ENCODE measurements at regions of chr19 and their contacts with region 1.

Region 1: DNA sequence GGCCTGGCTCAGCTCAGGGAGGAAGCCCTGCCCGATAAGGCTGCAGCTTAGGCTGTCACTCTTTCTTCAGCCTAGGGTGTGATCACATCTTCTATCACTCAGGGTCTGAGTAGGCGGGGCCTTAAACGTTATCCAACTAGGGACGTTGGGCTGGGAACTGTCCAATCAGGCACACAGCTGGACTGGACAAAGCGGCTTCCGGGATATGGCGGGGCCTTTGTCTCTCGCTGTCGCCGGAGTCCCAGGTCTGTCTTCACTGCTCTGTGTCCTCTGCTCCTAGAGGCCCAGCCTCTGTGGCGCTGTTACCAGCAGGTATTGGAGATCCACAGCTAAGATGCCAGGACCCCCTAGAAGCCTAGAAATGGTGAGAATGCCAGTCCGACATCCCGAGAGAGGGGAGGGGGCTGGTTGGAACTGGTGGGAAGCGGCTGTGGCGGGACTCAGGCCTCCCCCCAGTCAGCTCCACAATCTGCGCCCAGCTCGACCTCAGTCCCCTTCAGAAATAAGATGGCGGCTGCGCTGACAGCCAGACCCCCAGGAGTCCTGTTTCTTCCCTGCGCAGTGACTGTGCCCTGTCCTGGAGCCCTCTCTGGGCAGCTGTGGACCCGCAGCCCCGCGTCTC is at the start of gene ZNF254:
- DNase-seq: peak; percentile 84
- H3K4me3 ChIP-seq: peak within 1 kb of the TSS; percentile 65 to 88
- H3K27ac ChIP-seq: peak within 1 kb of the TSS; percentile 83 to 91
- H3K4me1 ChIP-seq: no peaks in the 10 kb centered on the region; a peak in 1 of 4 replicates
- H3K27me3 ChIP-seq: no peaks in the 10 kb centered on the region
- CTCF ChIP-seq: no peak
- EP300 ChIP-seq: 0 out of 4 replicates have a peak, but pooled peaks of 1 of the 2 experiments have one; percentile 19
- RAD21 ChIP-seq: no peak
- polyA plus RNA-seq, gene ZNF254: 3.1 and 4.2 TPM in 2 replicates

Region 2: DNA sequence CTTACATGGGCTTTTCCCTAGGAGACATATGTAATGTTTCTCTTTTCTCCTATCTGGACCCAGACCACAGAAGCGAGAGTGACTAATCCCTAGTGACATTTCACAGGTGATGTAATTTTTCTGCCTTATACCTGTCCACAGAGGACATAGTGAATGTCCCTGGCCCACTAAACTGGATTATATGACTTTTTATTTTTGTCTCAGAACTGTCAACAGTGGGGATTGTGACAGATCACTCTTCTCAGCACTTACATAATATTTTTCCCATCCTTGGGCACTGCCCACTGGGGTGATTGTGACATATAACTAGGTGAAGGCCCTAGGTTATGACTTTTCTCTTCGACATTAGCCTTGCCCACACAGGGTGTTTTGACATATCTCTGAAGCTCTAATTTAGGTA is 180.2 kb before region 1 on chr19:
- CTCF ChIA-PET with region 1: no interaction called
- POLR2A ChIA-PET with region 1: no interaction called
- DNase-seq: no peak
- H3K4me3 ChIP-seq: no peak overlapping the region
- H3K27ac ChIP-seq: no peak overlapping the region
- H3K4me1 ChIP-seq: no peaks in the 10 kb centered on the region
- H3K27me3 ChIP-seq: no peaks in the 10 kb centered on the region
- CTCF ChIP-seq: no peak
- EP300 ChIP-seq: no peak
- RAD21 ChIP-seq: no peak

Region 3: DNA sequence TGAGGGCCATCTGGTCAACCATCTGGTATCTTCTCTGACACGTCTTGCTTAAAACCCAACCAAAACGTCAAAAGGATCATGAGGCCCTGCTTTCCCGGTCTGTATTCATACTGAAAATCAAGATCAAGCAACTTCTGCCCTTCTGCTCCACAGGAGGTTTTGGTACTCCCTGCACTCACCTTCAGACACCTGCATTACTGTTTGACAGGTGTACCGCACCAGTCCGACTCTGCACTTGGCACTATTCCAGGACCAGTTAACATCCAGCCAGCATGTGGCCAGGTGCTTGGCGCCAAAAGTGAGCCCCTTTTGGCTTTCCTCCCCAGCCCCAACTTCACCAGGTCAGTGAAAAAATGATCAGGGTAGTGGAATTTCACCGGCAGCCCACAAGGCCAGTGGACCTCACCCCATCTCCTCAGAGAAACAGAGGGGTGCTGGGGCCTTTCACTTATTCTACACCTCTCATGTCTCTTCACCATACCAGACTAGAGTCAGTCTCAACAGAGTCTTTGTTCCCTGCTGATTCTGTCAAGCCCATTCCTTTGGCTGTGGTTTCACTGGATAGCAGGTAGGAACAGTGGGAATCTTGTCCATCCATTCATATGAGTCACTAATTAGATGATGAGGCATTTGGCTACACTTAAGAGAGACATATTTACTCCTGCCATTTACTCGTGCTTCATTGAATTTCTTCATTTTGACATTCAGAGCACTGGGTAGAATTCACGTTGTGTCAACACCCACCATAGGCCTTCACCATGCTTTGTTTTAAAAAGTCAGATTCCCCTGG is 87.1 kb before region 1 on chr19:
- CTCF ChIA-PET with region 1: no interaction called
- POLR2A ChIA-PET with region 1: no interaction called
- DNase-seq: no peak
- H3K4me3 ChIP-seq: no peak overlapping the region
- H3K27ac ChIP-seq: no peak overlapping the region
- H3K4me1 ChIP-seq: no peaks in the 10 kb centered on the region
- H3K27me3 ChIP-seq: no peaks in the 10 kb centered on the region
- CTCF ChIP-seq: no peak
- EP300 ChIP-seq: no peak
- RAD21 ChIP-seq: no peak

Region 4: DNA sequence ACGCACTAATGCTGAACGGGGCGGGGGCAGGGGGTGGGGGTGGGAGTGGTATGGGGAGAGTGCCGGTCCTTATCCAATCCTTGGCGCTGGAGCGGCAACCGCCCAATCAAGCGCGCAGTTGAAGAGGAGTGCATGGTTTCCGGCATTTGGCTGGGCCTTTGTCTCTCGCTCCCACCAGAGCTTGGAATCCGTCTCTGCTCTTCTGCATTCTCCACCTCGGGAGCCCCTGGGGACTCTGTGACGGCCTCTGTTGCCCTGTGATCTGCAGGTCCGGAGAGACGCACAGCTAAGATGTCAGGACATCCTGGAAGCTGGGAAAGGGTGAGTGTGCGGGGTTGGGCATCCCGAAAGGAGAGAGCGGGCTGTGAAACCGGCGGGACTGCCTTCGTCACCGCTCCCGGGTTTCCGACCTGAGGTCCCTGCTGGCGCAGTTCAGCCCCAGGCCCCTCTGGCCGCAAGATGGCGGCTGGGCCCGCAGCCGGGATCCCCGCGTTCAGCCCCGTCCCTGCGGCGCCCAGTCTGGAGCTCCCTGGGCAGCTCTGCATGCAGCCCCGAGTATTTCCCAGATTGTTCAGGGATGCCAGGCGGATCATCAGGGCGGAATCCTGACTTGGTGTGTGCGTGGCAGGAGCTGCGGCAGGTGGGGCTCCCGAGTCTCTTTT is 53.7 kb before region 1 on chr19:
- CTCF ChIA-PET with region 1: no interaction called
- POLR2A ChIA-PET with region 1: interaction called, 22 read pairs
- DNase-seq: peak; percentile 94
- H3K4me3 ChIP-seq: peak overlapping the region; percentile 70 to 96
- H3K27ac ChIP-seq: peak overlapping the region; percentile 96 to 97
- H3K4me1 ChIP-seq: peaks cover 5% of the 10 kb centered on the region in 2 experiments; a peak in 2 of 4 replicates
- H3K27me3 ChIP-seq: no peaks in the 10 kb centered on the region
- CTCF ChIP-seq: no peak; the same call in 1 of the 2 replicates
- EP300 ChIP-seq: no peak
- RAD21 ChIP-seq: no peak; the same call in 1 of the 2 replicates